H1 (cell line): ENCODE measurements at regions of chr4 and their contacts with region 1.

Region 1: DNA sequence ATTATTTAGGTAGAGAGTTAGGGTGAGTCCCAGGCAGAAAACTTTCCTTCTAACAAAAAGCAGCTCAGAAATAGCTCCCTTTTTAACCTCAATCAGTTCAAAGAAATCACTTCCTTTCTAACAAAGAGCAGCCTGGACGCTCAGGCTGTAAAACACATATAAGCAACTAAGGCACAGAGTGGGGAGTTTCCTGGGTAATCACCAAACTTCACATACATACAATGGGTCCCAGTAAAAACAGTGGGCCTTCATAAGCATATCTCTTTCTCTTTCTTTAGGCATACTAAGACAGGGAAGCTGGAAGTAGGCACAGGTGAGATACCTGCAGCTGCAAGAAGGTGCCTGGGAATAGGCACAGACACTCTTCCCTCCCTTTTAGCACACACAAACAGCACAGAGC is 4.9 kb upstream of the NAF1 start:
- DNase-seq: no peak
- H3K4me3 ChIP-seq: no peak overlapping the region
- H3K27ac ChIP-seq: no peak overlapping the region
- H3K4me1 ChIP-seq: no peaks in the 10 kb centered on the region
- H3K27me3 ChIP-seq: no peaks in the 10 kb centered on the region
- CTCF ChIP-seq: no peak
- EP300 ChIP-seq: no peak
- POLR2A ChIP-seq: no peak
- RAD21 ChIP-seq: no peak

Region 2: GRCh38 chr4:163191999-163192398 is 20.4 kb after region 1 on chr4:
- CTCF ChIA-PET with region 1: interaction called, 21 read pairs
- POLR2A ChIA-PET with region 1: no interaction called
- DNase-seq: no peak
- H3K4me3 ChIP-seq: no peak overlapping the region
- H3K27ac ChIP-seq: no peak overlapping the region
- H3K4me1 ChIP-seq: no peaks in the 10 kb centered on the region
- H3K27me3 ChIP-seq: no peaks in the 10 kb centered on the region
- CTCF ChIP-seq: peak in 2 of 3 experiments; percentile 56; a peak in 3 of 4 replicates
- EP300 ChIP-seq: no peak
- POLR2A ChIP-seq: no peak
- RAD21 ChIP-seq: peak; percentile 61 to 71